Activated B cell treated with CpG ODN at 0.5 μM for 24 hours (primary cell): ENCODE measurements at regions of chr2 and their contacts with region 1.

Region 1: GRCh38 chr2:221573430-221574230 is 1.5 kb upstream of the EPHA4 start:
- DNase-seq: peak; percentile 88
- ATAC-seq: peak; percentile 42
- H3K4me3 Mint-ChIP-seq: peak overlapping the region; percentile 89
- H3K27ac Mint-ChIP-seq: peak overlapping the region; percentile 31
- H3K4me1 Mint-ChIP-seq: peaks cover 41% of the 10 kb centered on the region
- H3K27me3 Mint-ChIP-seq: peaks cover 22% of the 10 kb centered on the region
- CTCF ChIP-seq: peak; percentile 89

Region 2: GRCh38 chr2:220891405-220891804 is 682.2 kb before region 1 on chr2:
- CTCF ChIA-PET with region 1: no interaction called
- POLR2A ChIA-PET with region 1: no interaction called
- intact Hi-C with region 1: loop called (anchors 5 kb)
- DNase-seq: no peak
- ATAC-seq: no peak
- H3K4me3 Mint-ChIP-seq: no peak overlapping the region
- H3K27ac Mint-ChIP-seq: no peak overlapping the region
- H3K4me1 Mint-ChIP-seq: no peaks in the 10 kb centered on the region
- H3K27me3 Mint-ChIP-seq: peaks cover 5% of the 10 kb centered on the region
- CTCF ChIP-seq: no peak

Region 3: GRCh38 chr2:221166292-221166691 is 407.3 kb before region 1 on chr2:
- CTCF ChIA-PET with region 1: no interaction called
- POLR2A ChIA-PET with region 1: no interaction called
- intact Hi-C with region 1: loop called (anchors 1 kb)
- DNase-seq: no peak
- ATAC-seq: peak; percentile 85
- H3K4me3 Mint-ChIP-seq: no peak overlapping the region
- H3K27ac Mint-ChIP-seq: no peak overlapping the region
- H3K4me1 Mint-ChIP-seq: peaks cover 9% of the 10 kb centered on the region
- H3K27me3 Mint-ChIP-seq: peaks cover 4% of the 10 kb centered on the region
- CTCF ChIP-seq: no peak

Region 4: GRCh38 chr2:221423210-221423786 is 150.3 kb before region 1 on chr2:
- CTCF ChIA-PET with region 1: no interaction called
- POLR2A ChIA-PET with region 1: no interaction called
- intact Hi-C with region 1: loop called (anchors 5 kb)
- DNase-seq: no peak
- ATAC-seq: no peak
- H3K4me3 Mint-ChIP-seq: no peak overlapping the region
- H3K27ac Mint-ChIP-seq: no peak overlapping the region
- H3K4me1 Mint-ChIP-seq: peaks cover 26% of the 10 kb centered on the region
- H3K27me3 Mint-ChIP-seq: no peaks in the 10 kb centered on the region
- CTCF ChIP-seq: no peak

Region 5: DNA sequence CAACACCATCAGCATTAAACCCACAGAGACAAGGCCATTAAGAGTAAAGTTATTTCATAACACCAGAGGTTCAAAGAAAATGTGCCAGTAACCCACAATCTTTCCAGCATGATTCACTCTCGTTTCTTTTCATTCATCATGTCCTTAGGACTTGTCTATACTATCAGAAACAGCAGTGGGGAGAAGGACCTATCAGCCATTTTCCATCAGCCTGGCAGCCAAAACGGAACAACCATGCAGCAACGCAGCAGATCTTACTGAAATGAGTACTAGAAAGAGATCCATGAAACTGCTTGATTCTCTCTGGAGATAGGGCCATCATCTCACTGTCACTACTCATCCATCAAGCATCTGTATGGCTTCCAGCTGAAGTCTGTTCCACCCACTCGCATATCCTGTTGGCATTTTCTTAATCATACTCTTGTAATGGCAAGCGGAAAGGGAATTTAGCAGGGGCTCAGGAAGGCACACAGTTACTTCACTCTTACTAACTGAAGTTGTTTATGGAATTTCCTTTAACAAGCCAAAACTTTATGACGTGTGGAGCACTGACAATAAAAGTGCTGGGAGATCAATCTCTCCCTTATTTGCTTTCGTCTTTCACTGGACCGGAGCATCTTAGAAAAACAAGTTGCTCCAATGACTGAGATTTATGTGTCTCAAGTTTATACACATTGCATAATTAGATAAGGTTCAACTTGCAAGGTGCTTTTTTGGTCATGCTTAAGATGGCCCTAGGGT is 71.2 kb before region 1 on chr2:
- CTCF ChIA-PET with region 1: no interaction called
- POLR2A ChIA-PET with region 1: no interaction called
- intact Hi-C with region 1: no loop called
- DNase-seq: no peak
- ATAC-seq: no peak
- H3K4me3 Mint-ChIP-seq: no peak overlapping the region
- H3K27ac Mint-ChIP-seq: no peak overlapping the region
- H3K4me1 Mint-ChIP-seq: peaks cover 30% of the 10 kb centered on the region
- H3K27me3 Mint-ChIP-seq: no peaks in the 10 kb centered on the region
- CTCF ChIP-seq: no peak

Region 6: DNA sequence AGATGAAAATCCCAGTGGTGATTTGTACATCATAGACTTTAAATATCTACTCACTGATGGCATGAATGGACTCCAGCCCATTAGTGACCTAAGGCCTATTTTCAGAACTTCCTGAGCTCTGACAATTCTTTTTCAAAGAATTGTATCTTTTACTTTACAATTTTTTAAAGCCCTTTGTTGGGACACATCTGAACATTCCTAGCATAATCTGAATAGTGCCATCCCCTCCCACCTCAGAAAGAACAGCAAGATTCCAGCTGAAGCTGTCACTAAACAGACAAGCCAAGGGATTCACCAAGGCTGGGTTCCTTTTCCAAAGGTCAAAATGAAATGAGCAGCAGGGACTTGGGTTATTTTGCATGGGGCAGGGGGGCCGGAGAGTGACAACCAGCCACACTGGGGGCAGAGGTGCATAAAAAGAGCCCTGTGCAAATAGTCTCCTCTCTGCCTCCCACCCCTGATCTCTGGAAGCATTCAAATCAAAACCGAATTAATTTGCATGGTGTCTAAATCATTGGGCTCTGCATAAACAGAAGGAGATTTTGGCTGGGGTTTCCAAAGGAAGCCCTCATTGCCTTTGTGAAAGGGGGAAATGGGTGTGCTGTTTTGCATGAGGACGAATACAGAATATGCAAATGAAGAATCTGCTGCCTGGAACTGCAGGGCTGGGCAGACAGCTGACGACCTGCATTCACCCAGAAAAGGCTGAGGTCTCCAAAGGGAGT is 18.7 kb before region 1 on chr2:
- CTCF ChIA-PET with region 1: interaction called, 3 read pairs
- POLR2A ChIA-PET with region 1: interaction called, 6 read pairs
- intact Hi-C with region 1: loop called (anchors 1 kb)
- DNase-seq: no peak
- ATAC-seq: peak; percentile 92
- H3K4me3 Mint-ChIP-seq: peak overlapping the region; percentile 68
- H3K27ac Mint-ChIP-seq: peak overlapping the region; percentile 91
- H3K4me1 Mint-ChIP-seq: peaks cover 73% of the 10 kb centered on the region
- H3K27me3 Mint-ChIP-seq: no peaks in the 10 kb centered on the region
- CTCF ChIP-seq: no peak

Region 7: GRCh38 chr2:221662689-221663391 is 89.2 kb after region 1 on chr2:
- CTCF ChIA-PET with region 1: no interaction called
- POLR2A ChIA-PET with region 1: no interaction called
- intact Hi-C with region 1: no loop called
- DNase-seq: no peak
- ATAC-seq: no peak
- H3K4me3 Mint-ChIP-seq: no peak overlapping the region
- H3K27ac Mint-ChIP-seq: no peak overlapping the region
- H3K4me1 Mint-ChIP-seq: no peaks in the 10 kb centered on the region
- H3K27me3 Mint-ChIP-seq: no peaks in the 10 kb centered on the region
- CTCF ChIP-seq: no peak

Region 8: GRCh38 chr2:222176890-222177289 is 603.3 kb after region 1 on chr2:
- CTCF ChIA-PET with region 1: no interaction called
- POLR2A ChIA-PET with region 1: no interaction called
- intact Hi-C with region 1: no loop called
- DNase-seq: no peak
- ATAC-seq: no peak
- H3K4me3 Mint-ChIP-seq: no peak overlapping the region
- H3K27ac Mint-ChIP-seq: no peak overlapping the region
- H3K4me1 Mint-ChIP-seq: no peaks in the 10 kb centered on the region
- H3K27me3 Mint-ChIP-seq: no peaks in the 10 kb centered on the region
- CTCF ChIP-seq: no peak